ENCODE measurements at regions of chrX and their contacts with region 1.

Region 1: GRCh38 chrX:101462892-101463291 is 22.4 kb upstream of the ARMCX4 start:
- DNase-seq: peak; percentile 16
- H3K4me3 ChIP-seq: no peak overlapping the region
- H3K27ac ChIP-seq: no peak overlapping the region
- H3K4me1 ChIP-seq: no peaks in the 10 kb centered on the region
- H3K27me3 ChIP-seq: no peaks in the 10 kb centered on the region
- CTCF ChIP-seq: peak; percentile 26 to 62

Region 2: GRCh38 chrX:101759000-101759399 is 296.1 kb after region 1 on chrX:
- CTCF ChIA-PET with region 1: no interaction called
- dilution Hi-C with region 1: no loop called
- in situ Hi-C with region 1: no loop called
- intact Hi-C with region 1: loop called (anchors 5 kb)
- DNase-seq: peak; percentile 1
- H3K4me3 ChIP-seq: no peak overlapping the region
- H3K27ac ChIP-seq: no peak overlapping the region
- H3K4me1 ChIP-seq: no peaks in the 10 kb centered on the region
- H3K27me3 ChIP-seq: no peaks in the 10 kb centered on the region
- CTCF ChIP-seq: peak; percentile 44 to 55

Region 3: GRCh38 chrX:101799387-101799786 is 336.5 kb after region 1 on chrX:
- CTCF ChIA-PET with region 1: no interaction called
- dilution Hi-C with region 1: no loop called
- in situ Hi-C with region 1: no loop called
- intact Hi-C with region 1: loop called (anchors 5 kb)
- DNase-seq: peak; percentile 78
- H3K4me3 ChIP-seq: no peak overlapping the region
- H3K27ac ChIP-seq: no peak overlapping the region
- H3K4me1 ChIP-seq: no peaks in the 10 kb centered on the region
- H3K27me3 ChIP-seq: no peaks in the 10 kb centered on the region
- CTCF ChIP-seq: peak; percentile 60 to 70

Measured in mammary epithelial cell (primary cell).